ENCODE measurements at regions of chr17 and their contacts with region 1.

Region 1: DNA sequence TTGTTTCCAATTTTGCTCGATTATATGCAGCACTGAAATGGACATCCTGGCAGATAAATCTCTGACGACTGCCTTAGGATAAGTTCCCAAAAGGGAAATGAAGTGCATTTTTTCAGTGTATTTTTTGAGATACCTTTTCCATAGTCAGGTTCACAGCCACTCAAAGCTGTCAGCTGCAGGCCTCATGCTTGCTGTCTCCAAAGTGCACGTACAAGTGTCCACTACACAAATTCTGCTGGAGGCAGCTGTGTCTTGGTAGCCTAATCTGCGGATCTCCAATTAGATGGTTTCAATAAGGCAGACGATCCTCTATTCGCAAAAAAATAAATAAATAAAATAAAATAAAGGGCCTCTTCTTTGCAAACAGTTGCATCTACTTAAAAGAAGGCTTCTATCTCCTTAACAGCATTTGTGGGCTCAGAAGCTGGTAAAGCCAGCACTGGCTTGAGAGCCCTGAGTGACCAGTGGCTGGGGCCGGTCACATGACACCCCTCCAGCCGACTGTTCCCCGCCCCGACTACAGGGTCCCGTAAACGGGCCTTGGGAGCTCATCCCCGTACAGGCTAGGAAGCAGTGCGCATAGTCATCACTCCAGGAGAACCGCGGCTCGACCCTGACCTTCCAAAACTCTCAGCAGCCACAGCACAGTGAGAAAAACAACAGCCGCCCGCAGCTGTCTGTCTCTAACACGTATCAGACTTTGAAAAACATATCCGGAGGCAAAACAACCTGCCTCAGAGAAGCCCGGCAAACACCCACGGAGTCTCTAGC is 18.8 kb downstream of the RPH3AL start:
- DNase-seq: peak; percentile 90

Region 2: GRCh38 chr17:266701-267667 is 66.8 kb before region 1 on chr17:
- intact Hi-C with region 1: loop called (anchors 5 kb)
- DNase-seq: no peak

Region 3: GRCh38 chr17:360092-360750 is 26.4 kb after region 1 on chr17:
- intact Hi-C with region 1: no loop called
- DNase-seq: no peak